ENCODE measurements at regions of chr16 and their contacts with region 1.

Region 1: DNA sequence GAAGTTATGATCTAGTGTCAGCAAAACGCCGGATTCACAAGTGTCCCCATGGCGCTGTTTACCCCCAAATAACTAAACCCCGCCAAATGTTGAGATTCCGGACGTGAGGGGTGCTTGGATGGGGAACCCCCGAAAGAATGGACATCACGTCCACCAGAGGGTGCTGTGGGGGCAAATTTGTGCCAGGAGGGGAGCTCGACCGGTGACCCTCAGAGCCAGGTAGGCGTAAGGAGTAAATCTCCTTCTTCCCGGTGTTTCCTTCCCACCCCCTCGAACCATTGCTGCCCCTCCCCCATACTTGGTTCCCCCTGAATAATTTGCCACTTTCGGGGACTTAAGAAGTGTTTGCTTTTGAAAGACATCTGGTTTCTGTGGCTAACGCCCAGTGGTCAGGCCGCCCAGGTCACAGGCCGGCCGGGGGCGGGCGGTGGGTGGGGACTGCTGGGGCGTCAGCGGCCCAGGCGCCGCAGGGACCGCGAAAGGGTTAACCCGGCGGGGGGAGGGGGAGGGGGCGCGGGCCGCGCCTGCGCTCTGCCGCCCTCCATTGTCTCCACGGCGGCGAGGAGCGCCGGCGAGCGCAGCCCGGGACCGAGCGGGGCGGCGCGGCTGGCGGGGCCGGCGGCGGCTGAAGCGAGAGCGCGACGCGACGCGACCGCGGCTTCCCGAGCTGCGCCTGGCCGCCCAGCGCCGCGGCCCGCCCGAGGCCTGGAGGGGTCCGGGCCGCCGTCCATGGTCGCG is at the start of gene ZNRF1:
- DNase-seq: peak; percentile 89 to 92
- H3K4me3 ChIP-seq: peak within 1 kb of the TSS; percentile 2 to 87 (median 62)
- H3K27ac ChIP-seq: peak within 1 kb of the TSS; percentile 82 to 85 (median 85)
- H3K4me1 ChIP-seq: peaks cover 35 to 36% of the 10 kb centered on the region in 2 donors
- H3K27me3 ChIP-seq: no peaks in the 10 kb centered on the region
- CTCF ChIP-seq: peak; percentile 49 to 90 (median 78)
- POLR2A ChIP-seq: peak; percentile 44 to 83
- total RNA-seq, gene ZNRF1: 47.4 to 94.5 (median 57.4) TPM

Region 2: DNA sequence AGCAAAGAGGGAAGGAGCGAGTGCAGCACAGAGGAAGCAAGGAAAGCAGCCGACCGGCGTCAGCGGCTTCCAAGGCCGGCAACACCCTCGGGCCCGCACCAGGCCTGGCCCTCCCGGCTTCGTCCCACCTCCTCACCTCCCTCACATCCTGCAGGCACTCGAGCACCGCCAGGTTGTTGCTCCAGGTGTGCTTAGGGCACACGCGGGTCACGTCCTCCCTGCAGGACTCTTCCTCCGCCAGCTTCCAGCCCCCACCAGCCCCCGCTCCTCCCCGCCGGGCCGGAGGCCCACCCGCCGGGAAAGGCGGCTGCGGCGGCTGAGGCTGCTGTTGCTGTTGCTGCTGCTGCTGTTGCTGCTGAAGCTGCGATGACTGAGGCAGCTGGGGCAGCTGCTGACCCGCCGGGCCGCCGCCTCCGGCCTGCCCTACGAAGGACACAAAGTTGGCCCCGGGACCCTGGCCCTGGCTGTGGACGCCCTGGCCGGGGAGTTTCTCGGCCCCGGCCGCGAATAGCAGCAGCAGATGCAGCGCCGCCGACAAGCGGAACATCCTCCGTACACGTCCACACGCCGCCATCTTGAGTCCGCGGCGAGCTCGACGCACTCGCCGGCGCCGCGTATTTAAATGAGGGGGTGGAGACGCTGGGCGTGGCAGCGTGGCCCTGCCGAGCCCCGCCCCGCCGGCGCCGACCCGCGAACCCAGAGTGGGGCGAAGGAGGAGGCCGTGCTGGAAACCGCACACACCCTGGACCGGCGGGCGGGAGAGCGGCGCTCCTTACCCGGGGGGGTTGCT is 391.9 kb before region 1 on chr16 and contains the start of gene GLG1:
- intact Hi-C with region 1: no loop called
- DNase-seq: peak; percentile 90 to 91
- H3K4me3 ChIP-seq: peak within 1 kb of the TSS; percentile 87 to 98 (median 95)
- H3K27ac ChIP-seq: peak within 1 kb of the TSS; percentile 85 to 95 (median 90)
- H3K4me1 ChIP-seq: peaks cover 12 to 23% of the 10 kb centered on the region in 2 donors
- H3K27me3 ChIP-seq: no peaks in the 10 kb centered on the region
- CTCF ChIP-seq: no peak
- POLR2A ChIP-seq: peak; percentile 79 to 93
- total RNA-seq, gene GLG1: 127 to 182 (median 151) TPM

Region 3: GRCh38 chr16:74936902-74937560 is 61.6 kb before region 1 on chr16:
- intact Hi-C with region 1: no loop called
- DNase-seq: no peak
- H3K4me3 ChIP-seq: no peak overlapping the region
- H3K27ac ChIP-seq: no peak overlapping the region
- H3K4me1 ChIP-seq: no peaks in the 10 kb centered on the region
- H3K27me3 ChIP-seq: no peaks in the 10 kb centered on the region
- CTCF ChIP-seq: no peak
- POLR2A ChIP-seq: no peak

Region 4: GRCh38 chr16:75110637-75111513 is 112.2 kb after region 1 on chr16:
- intact Hi-C with region 1: loop called (anchors 2 kb)
- DNase-seq: peak; percentile 93 to 95
- H3K4me3 ChIP-seq: no peak overlapping the region
- H3K27ac ChIP-seq: peak overlapping the region; percentile 82 to 93 (median 91)
- H3K4me1 ChIP-seq: peaks cover 54 to 71% of the 10 kb centered on the region in 2 donors
- H3K27me3 ChIP-seq: no peaks in the 10 kb centered on the region
- CTCF ChIP-seq: peak; percentile 81 to 97 (median 93)
- POLR2A ChIP-seq: peak in 1 of 2 donors; percentile 16